Activated CD4-positive, alpha-beta memory T cell treated with anti-CD3 and anti-CD28 coated beads, Interleukin-2, amount 10 ng/mL, durations not matched to agents 7 days and 5 days (primary cell): ENCODE measurements at regions of chr17 and their contacts with region 1.

Region 1: GRCh38 chr17:64025732-64026294 is 5.4 kb upstream of the ICAM2 start:
- DNase-seq: peak; percentile 95
- H3K4me3 Mint-ChIP-seq: peak overlapping the region; percentile 73
- H3K27ac Mint-ChIP-seq: peak overlapping the region; percentile 99
- H3K4me1 Mint-ChIP-seq: peaks cover 75% of the 10 kb centered on the region
- H3K27me3 Mint-ChIP-seq: no peaks in the 10 kb centered on the region

Region 2: DNA sequence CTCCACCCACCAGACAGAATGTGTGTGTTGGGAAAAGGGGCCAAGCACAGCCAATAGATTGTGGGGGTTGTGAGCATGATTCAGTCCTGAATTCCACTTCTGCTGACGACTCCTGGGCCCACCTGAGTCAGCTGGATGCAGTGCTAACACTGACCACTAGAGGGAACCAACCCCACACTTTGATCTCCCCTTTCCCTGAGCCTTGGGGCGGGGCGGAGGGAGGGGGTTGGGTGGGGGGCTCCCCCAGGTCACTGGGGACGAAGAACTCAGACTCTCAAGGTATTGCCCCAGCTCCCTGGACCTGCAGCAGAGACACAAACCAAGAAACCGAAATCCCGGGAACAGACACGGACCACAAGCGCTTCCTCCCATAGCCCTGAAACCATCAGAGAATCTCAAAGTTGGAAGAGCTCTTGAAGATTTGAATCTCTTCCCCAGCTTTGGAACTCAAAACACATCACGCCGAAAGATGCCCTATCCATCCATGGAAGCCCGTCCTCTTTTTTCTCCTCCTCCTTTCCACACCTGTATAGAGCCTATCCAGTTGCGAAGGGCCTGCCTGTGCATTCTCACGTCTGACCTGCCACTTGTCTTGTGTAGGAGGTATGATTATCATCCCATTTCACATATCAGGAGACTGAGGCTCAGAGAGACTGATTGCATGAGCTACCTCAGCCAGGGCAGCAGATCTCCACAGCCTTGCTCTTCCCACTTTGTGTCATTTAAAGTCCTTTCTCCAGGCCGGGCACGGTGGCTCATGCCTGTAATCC is 114.0 kb before region 1 on chr17:
- CTCF ChIA-PET with region 1: interaction called, 51 read pairs
- POLR2A ChIA-PET with region 1: no interaction called
- DNase-seq: peak; percentile 69
- H3K4me3 Mint-ChIP-seq: no peak overlapping the region
- H3K27ac Mint-ChIP-seq: no peak overlapping the region
- H3K4me1 Mint-ChIP-seq: no peaks in the 10 kb centered on the region
- H3K27me3 Mint-ChIP-seq: peaks cover 26% of the 10 kb centered on the region

Region 3: GRCh38 chr17:63931099-63931561 is 94.7 kb before region 1 on chr17:
- CTCF ChIA-PET with region 1: interaction called, 6 read pairs
- POLR2A ChIA-PET with region 1: interaction called, 18 read pairs
- DNase-seq: peak; percentile 79
- H3K4me3 Mint-ChIP-seq: peak overlapping the region; percentile 96
- H3K27ac Mint-ChIP-seq: peak overlapping the region; percentile 90
- H3K4me1 Mint-ChIP-seq: peaks cover 31% of the 10 kb centered on the region
- H3K27me3 Mint-ChIP-seq: peaks cover 4% of the 10 kb centered on the region

Region 4: DNA sequence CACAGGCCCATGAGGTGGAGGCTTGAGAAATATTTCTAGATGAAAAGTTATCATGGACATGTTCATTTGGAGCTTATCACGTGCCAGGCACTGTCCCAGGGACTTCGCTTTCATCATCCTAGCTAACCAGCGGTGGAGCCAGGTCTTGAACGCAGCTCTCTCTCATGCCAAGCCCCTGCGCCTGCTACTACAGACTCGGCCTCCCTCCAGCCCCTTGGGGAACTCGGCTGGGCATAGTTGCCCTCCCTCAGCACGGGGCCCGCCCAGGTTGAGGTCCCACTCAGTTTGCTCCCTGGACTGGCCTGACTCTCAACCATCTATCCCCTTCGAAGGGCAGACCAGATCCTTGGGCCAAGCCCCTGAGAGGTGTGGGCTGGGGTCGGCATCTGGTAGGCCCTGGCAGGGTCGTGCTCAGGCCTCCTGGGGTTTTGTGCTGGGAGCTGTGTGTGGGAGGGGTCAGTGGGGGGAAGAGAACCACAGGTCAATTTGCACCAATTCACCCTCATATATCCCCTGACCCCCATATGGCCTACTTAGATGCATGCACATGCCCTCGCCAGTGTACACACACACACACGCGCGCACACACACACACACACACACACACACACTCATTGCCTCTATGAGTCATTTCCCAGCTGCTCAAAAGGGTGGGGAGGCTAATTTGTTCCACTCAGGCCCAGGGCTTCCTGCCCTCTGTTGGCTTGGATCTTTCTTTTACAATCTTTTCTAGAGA is 41.0 kb before region 1 on chr17:
- CTCF ChIA-PET with region 1: interaction called, 24 read pairs
- POLR2A ChIA-PET with region 1: interaction called, 22 read pairs
- DNase-seq: peak; percentile 79
- H3K4me3 Mint-ChIP-seq: no peak overlapping the region
- H3K27ac Mint-ChIP-seq: peak overlapping the region; percentile 85
- H3K4me1 Mint-ChIP-seq: peaks cover 35% of the 10 kb centered on the region
- H3K27me3 Mint-ChIP-seq: no peaks in the 10 kb centered on the region

Region 5: GRCh38 chr17:64041912-64042311 is 16.1 kb after region 1 on chr17:
- CTCF ChIA-PET with region 1: interaction called, 22 read pairs
- POLR2A ChIA-PET with region 1: interaction called, 3 read pairs
- DNase-seq: no peak
- H3K4me3 Mint-ChIP-seq: no peak overlapping the region
- H3K27ac Mint-ChIP-seq: no peak overlapping the region
- H3K4me1 Mint-ChIP-seq: peaks cover 33% of the 10 kb centered on the region
- H3K27me3 Mint-ChIP-seq: no peaks in the 10 kb centered on the region

Region 6: GRCh38 chr17:64081802-64082799 is 56.3 kb after region 1 on chr17:
- CTCF ChIA-PET with region 1: interaction called, 13 read pairs
- POLR2A ChIA-PET with region 1: interaction called, 15 read pairs
- DNase-seq: peak; percentile 84
- H3K4me3 Mint-ChIP-seq: peak overlapping the region; percentile 54
- H3K27ac Mint-ChIP-seq: no peak overlapping the region
- H3K4me1 Mint-ChIP-seq: peaks cover 31% of the 10 kb centered on the region
- H3K27me3 Mint-ChIP-seq: no peaks in the 10 kb centered on the region